ENCODE measurements at regions of chr12 and their contacts with region 1.

Region 1: DNA sequence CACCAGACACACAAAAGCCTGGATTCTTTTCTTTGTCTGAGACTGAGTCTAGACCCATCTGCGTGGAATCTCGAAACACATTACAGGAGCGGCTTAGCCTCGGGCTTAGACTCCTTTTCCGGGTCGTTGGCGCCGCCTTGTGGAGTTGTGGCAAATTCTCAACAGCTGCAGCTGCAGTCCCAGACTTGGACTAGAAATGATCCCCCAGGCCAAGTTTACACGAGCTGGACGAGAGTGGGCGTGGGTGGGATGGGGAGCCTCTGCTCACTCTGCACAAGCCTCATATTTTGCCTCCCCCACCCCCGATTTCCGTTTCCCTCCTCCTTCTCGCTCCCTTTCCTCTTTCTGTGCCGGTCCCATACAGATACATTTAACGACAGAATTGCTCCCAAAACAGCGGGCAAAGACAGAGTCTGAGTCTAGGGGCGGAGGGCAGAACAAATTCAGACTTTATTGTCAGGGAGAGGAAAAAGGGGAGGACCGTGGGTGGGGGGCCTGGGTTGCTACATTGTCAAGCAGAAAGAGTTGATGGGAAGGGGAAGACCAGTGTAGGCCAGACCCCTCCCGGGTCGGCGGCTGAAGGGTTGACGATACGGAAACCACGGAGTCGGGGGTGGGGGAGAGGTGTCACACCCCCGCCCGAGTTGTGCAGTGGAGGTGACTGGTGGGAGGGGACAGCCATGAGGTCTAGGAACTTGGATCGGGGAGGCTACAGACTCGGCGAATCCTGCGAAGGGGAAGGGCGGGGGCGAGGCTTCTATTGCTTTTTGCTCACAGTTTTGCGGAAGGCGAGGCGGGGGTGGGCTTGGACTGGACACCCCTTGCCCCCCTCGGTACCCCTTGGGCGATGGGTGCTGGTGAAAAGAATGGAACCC is 4.7 kb upstream of the GPR84 start:
- DNase-seq: peak; percentile 79
- H3K4me3 Mint-ChIP-seq: peak overlapping the region; percentile 53
- H3K27ac Mint-ChIP-seq: no peak overlapping the region
- H3K4me1 Mint-ChIP-seq: peaks cover 30% of the 10 kb centered on the region
- H3K27me3 Mint-ChIP-seq: no peaks in the 10 kb centered on the region

Region 2: GRCh38 chr12:54220092-54220557 is 148.8 kb before region 1 on chr12:
- intact Hi-C with region 1: loop called (anchors 1 kb)
- DNase-seq: peak; percentile 61
- H3K4me3 Mint-ChIP-seq: no peak overlapping the region
- H3K27ac Mint-ChIP-seq: no peak overlapping the region
- H3K4me1 Mint-ChIP-seq: peaks cover 18% of the 10 kb centered on the region
- H3K27me3 Mint-ChIP-seq: peaks cover 4% of the 10 kb centered on the region

Region 3: DNA sequence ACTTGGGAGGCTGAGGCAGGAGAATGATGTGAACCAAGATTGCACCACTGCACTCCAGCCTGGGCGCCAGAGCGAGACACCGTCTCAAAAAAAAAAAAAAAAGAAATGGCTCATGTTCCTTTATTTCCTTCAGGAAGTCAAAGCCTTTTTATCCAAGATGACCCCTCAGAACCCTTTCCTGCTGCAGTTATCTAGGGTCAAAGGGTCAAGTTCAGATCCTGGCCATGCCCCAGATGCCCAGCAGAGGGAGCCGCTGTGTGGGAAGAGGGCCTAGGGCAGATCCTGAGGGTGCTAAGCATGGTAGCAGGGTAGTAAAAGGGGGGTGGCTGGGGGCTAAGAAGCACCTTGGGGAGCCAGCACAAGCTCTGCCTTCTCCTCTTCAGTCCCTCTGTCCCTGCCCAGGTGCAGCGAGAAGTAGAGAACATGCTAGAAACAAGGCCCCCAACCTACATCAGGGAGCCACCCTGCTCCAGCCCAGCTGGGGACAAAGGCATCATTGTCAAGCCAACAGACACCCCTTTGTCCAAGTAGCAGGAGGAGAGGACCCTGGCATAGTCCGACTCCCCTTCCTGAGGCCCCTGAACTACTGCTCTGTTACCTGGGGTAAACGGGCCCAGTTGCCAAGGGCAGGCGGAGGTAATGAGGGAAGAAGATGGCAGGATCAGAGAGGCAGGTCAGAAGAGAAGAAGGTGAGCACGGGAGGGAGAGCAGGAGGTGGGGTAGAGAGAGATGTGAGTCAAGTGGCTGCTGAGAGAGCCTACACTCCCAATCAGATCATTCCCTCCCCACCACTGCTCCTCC is 74.6 kb before region 1 on chr12:
- intact Hi-C with region 1: loop called (anchors 1 kb)
- DNase-seq: peak; percentile 55
- H3K4me3 Mint-ChIP-seq: no peak overlapping the region
- H3K27ac Mint-ChIP-seq: no peak overlapping the region
- H3K4me1 Mint-ChIP-seq: peaks cover 4% of the 10 kb centered on the region
- H3K27me3 Mint-ChIP-seq: peaks cover 18% of the 10 kb centered on the region

Region 4: GRCh38 chr12:54324617-54325441 is 44.1 kb before region 1 on chr12 and contains the start of gene COPZ1:
- intact Hi-C with region 1: loop called (anchors 1 kb)
- DNase-seq: peak; percentile 92
- H3K4me3 Mint-ChIP-seq: peak within 1 kb of the TSS; percentile 100
- H3K27ac Mint-ChIP-seq: peak within 1 kb of the TSS; percentile 97
- H3K4me1 Mint-ChIP-seq: peaks cover 21% of the 10 kb centered on the region
- H3K27me3 Mint-ChIP-seq: no peaks in the 10 kb centered on the region
- total RNA-seq, gene COPZ1: 108 and 109 TPM in 2 replicates

Region 5: GRCh38 chr12:54350743-54351142 is 18.2 kb before region 1 on chr12:
- intact Hi-C with region 1: loop called (anchors 2 kb)
- DNase-seq: no peak
- H3K4me3 Mint-ChIP-seq: no peak overlapping the region
- H3K27ac Mint-ChIP-seq: no peak overlapping the region
- H3K4me1 Mint-ChIP-seq: peaks cover 20% of the 10 kb centered on the region
- H3K27me3 Mint-ChIP-seq: no peaks in the 10 kb centered on the region

Region 6: DNA sequence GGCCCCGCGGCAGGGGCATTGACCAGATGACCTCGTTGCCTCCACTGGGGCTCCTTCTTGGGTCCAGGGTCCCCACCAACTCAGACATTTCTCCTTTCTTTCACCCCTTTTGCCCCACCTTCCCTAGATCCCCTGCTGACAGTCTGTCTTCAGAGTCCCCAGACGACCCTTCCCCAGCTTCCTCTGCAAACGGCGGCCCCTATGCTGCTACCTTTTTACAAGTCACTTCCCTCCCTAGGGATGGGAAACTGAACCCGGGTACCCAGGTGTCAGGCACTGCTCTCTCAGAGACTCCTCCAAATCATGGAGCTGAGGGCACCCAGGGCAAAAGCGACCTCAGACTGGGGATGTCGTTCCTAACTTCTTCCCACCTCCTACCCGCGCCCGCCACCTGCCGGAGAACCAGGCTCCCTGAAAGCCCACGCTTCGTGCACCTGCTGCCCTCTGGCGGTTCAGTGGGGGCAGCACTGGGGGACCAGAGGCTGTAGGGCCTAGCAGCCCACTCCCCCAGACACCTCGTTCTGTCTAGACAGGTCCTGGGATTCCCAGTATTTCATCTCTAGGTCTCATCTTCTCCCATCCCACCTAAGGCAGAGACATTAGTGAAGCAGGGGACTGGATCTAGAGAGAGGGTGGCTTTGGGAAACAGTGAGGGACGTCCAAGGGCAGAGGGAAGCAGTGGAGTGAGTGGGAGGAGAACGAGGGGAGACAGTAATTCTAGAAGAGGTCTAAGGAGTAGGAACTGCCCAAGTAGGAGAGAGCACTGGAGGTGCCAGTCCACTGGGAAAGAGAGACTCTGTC is 10.7 kb after region 1 on chr12:
- intact Hi-C with region 1: loop called (anchors 1 kb)
- DNase-seq: peak; percentile 83
- H3K4me3 Mint-ChIP-seq: peak overlapping the region; percentile 65
- H3K27ac Mint-ChIP-seq: no peak overlapping the region
- H3K4me1 Mint-ChIP-seq: peaks cover 11% of the 10 kb centered on the region
- H3K27me3 Mint-ChIP-seq: peaks cover 12% of the 10 kb centered on the region

Measured in activated T-helper 2 cell treated with anti-CD3 and anti-CD28 coated beads, Interferon-gamma antibody, Interleukin-2, Interleukin-4, amounts not matched to agents 10 μg/mL and 5 μg/mL and 100 μg/mL, durations not matched to agents 14 hours and 24 hours and 36 hours (primary cell).